Endothelial cell of umbilical vein (primary cell): ENCODE measurements at regions of chr12 and their contacts with region 1.

Region 1: GRCh38 chr12:57005980-57006808 is at the start of gene ZBTB39:
- DNase-seq: peak; percentile 37
- H3K4me3 ChIP-seq: peak within 1 kb of the TSS; percentile 64 to 91 (median 91)
- H3K27ac ChIP-seq: no peak within 1 kb of the TSS
- H3K4me1 ChIP-seq: peaks cover 8% of the 10 kb centered on the region
- H3K27me3 ChIP-seq: peaks cover under 1 to 2% of the 10 kb centered on the region in 2 experiments
- CTCF ChIP-seq: peak; percentile 44 to 56
- POLR2A ChIP-seq: peak; percentile 73
- total RNA-seq, gene ZBTB39: 8.1 and 8.5 TPM in 2 replicates

Region 2: DNA sequence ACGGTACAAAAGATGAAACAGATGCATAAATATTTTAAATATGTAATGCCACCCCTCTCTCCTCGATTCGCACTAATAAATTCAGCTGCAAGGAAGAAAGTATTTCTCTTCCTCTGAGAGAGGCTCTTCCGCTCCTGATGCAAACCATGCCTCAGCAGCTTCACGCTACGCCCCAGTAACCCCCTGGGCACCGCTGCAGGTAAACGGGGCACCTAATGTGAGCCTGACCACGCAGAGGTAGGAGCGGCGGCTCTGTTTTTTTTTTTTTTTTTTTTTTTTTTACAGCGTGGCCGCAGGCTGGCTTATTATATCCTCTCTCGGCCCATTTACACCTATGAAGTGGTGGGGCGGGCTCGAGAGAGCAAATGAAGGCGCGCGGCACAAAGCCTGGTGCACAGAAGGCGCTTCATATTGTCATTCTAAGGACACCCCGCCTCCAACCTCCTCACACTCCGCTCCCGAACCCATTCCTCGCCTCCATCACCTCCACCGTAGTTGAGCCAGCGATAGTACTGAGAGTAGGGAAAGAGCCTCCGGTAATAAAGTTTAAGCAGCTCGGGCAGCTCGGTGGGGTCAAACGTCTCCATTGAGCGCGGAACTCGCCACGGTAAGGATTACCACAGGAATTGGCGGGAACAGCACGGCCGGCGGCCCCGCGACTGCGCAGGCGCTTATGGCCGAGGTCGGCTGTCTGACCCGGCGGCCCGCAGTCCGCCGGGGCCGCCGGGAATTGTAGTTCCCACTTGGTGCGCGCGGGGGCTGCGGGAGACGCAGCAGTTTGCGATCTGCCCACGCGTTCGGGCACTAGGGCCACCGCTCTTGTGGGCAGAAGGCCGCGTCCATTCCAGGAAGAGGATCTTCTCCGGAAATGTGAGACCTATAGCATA is 254.2 kb before region 1 on chr12 and contains the start of gene PRIM1:
- CTCF ChIA-PET with region 1: interaction called, 32 read pairs
- POLR2A ChIA-PET with region 1: interaction called, 3 read pairs
- dilution Hi-C with region 1: no loop called
- intact Hi-C with region 1: loop called (anchors 1 kb)
- DNase-seq: peak; percentile 81
- H3K4me3 ChIP-seq: peak within 1 kb of the TSS; percentile 52 to 98 (median 94)
- H3K27ac ChIP-seq: peak within 1 kb of the TSS; percentile 75
- H3K4me1 ChIP-seq: peaks cover 11% of the 10 kb centered on the region
- H3K27me3 ChIP-seq: no peaks in the 10 kb centered on the region
- CTCF ChIP-seq: no peak
- POLR2A ChIP-seq: peak; percentile 62
- total RNA-seq, gene PRIM1: 12.1 and 13.4 TPM in 2 replicates

Region 3: GRCh38 chr12:56763753-56764657 is 242.2 kb before region 1 on chr12:
- CTCF ChIA-PET with region 1: interaction called, 44 read pairs
- POLR2A ChIA-PET with region 1: no interaction called
- dilution Hi-C with region 1: no loop called
- intact Hi-C with region 1: no loop called
- DNase-seq: no peak
- H3K4me3 ChIP-seq: no peak overlapping the region
- H3K27ac ChIP-seq: no peak overlapping the region
- H3K4me1 ChIP-seq: no peaks in the 10 kb centered on the region
- H3K27me3 ChIP-seq: peaks cover 0 to 2% of the 10 kb centered on the region in 2 experiments
- CTCF ChIP-seq: no peak
- POLR2A ChIP-seq: no peak

Region 4: GRCh38 chr12:56947633-56948456 is 58.3 kb before region 1 on chr12:
- CTCF ChIA-PET with region 1: interaction called, 16 read pairs
- POLR2A ChIA-PET with region 1: no interaction called
- dilution Hi-C with region 1: no loop called
- intact Hi-C with region 1: loop called (anchors 5 kb)
- DNase-seq: peak; percentile 45
- H3K4me3 ChIP-seq: no peak overlapping the region
- H3K27ac ChIP-seq: no peak overlapping the region
- H3K4me1 ChIP-seq: no peaks in the 10 kb centered on the region
- H3K27me3 ChIP-seq: peaks cover 6 to 9% of the 10 kb centered on the region in 2 experiments
- CTCF ChIP-seq: no peak
- POLR2A ChIP-seq: no peak

Region 5: GRCh38 chr12:57016318-57016717 is 10.1 kb after region 1 on chr12 and contains the start of gene TAC3:
- CTCF ChIA-PET with region 1: interaction called, 16 read pairs
- POLR2A ChIA-PET with region 1: no interaction called
- dilution Hi-C with region 1: no loop called
- intact Hi-C with region 1: no loop called
- DNase-seq: no peak
- H3K4me3 ChIP-seq: no peak within 1 kb of the TSS
- H3K27ac ChIP-seq: no peak within 1 kb of the TSS
- H3K4me1 ChIP-seq: no peaks in the 10 kb centered on the region
- H3K27me3 ChIP-seq: peaks cover 21% of the 10 kb centered on the region in 2 experiments
- CTCF ChIP-seq: no peak
- POLR2A ChIP-seq: no peak
- total RNA-seq, gene TAC3: not detected in 2 replicates

Region 6: GRCh38 chr12:57063991-57064685 is 57.9 kb after region 1 on chr12:
- CTCF ChIA-PET with region 1: interaction called, 22 read pairs
- POLR2A ChIA-PET with region 1: no interaction called
- dilution Hi-C with region 1: no loop called
- intact Hi-C with region 1: loop called (anchors 1 kb)
- DNase-seq: no peak
- H3K4me3 ChIP-seq: no peak overlapping the region
- H3K27ac ChIP-seq: no peak overlapping the region
- H3K4me1 ChIP-seq: no peaks in the 10 kb centered on the region
- H3K27me3 ChIP-seq: no peaks in the 10 kb centered on the region
- CTCF ChIP-seq: no peak
- POLR2A ChIP-seq: no peak

Region 7: DNA sequence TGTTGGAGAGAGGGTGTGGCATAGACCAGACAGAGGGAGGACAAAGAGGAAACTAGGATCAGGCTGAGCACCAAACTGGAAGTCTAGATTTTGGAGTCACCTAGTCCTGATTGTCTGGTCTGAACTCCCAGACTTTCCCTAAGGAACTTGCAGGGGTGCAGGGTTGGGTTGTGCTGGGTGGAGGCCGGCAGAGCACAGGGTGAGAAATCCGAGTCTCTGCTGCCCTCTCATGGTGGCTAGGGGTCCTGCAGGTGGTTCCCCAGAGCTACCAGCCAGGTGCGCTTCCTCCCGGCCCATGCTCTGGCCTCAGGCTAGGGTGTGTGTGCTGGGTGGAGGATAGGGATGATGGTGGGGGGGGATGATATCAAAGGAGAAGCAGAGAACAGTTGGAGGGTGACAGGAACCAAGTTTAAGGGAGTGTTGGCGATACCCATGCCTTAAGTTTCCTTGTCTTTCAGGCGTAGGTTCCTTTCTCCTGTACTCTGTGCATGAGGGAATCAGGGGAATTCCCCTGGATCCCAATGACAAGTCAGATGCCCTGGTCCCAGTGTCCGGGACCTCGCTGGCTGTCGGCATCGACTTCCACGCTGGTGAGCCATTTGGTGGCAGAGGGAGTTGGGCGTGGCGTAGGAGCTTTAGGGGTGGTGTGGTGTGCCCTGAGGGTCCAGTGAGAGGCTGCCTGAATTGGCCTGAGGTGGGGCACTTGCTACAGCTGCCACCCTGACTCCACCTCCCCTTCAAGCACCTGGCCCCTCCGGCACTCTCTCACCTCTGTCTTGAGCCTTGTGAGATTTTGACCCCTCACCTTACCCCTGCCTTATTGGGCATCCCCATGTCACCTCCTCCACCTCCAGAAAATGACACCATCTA is 177.0 kb after region 1 on chr12:
- CTCF ChIA-PET with region 1: interaction called, 3 read pairs
- POLR2A ChIA-PET with region 1: no interaction called
- dilution Hi-C with region 1: no loop called
- intact Hi-C with region 1: loop called (anchors 1 kb)
- DNase-seq: peak; percentile 50
- H3K4me3 ChIP-seq: no peak overlapping the region
- H3K27ac ChIP-seq: no peak overlapping the region
- H3K4me1 ChIP-seq: no peaks in the 10 kb centered on the region
- H3K27me3 ChIP-seq: peaks cover 2 to 5% of the 10 kb centered on the region in 2 experiments
- CTCF ChIP-seq: peak; percentile 92 to 94
- POLR2A ChIP-seq: no peak